ENCODE measurements at regions of chr2 and their contacts with region 1.

Region 1: DNA sequence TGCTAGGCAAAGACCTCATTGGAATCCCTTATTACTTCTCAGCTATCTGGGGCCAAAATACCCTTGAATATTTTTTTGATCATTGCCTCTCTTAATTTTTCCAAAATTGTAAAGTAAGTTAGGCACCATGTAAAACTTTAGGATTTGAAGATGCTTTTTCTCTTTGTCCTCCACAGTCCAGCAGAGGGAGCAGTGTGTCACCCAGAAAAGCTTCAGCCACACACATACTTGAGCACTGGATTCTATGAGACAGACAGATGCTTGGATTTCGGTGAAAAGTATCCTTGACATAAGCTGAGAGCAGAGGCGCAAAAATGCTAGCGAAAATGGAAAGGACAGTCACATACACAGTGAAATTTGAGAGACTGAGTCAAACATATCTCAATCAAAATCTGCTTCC is 74.7 kb upstream of the KCNJ3 start:
- DNase-seq: peak in 1 of 2 donors; percentile 49
- ATAC-seq: peak; percentile 66
- H3K4me3 ChIP-seq: no peak overlapping the region
- H3K27ac ChIP-seq: no peak overlapping the region
- H3K4me1 ChIP-seq: no peaks in the 10 kb centered on the region
- H3K27me3 ChIP-seq: no peaks in the 10 kb centered on the region

Region 2: GRCh38 chr2:153595939-153596338 is 1027.9 kb before region 1 on chr2:
- intact Hi-C with region 1: no loop called
- DNase-seq: no peak
- ATAC-seq: no peak
- H3K4me3 ChIP-seq: no peak overlapping the region
- H3K27ac ChIP-seq: no peak overlapping the region
- H3K4me1 ChIP-seq: no peaks in the 10 kb centered on the region
- H3K27me3 ChIP-seq: no peaks in the 10 kb centered on the region

Region 3: DNA sequence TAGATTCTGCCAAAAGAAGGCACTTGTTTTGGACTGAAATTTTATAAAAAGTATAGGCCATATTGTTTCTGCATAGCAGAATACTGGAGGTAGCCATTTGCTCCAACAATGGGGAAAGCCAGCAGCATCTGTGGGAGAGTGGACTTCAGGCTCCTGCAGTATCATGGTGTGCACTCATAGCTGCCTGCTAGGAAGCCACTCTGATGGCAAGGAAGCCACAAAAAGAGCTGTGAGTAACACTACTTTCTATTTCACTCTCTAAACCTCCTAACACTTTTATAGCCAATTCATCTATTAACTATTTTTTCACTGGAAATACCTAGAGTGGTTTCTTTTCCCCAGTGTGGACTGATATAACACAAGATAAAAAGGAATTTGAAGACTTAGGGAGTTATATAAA is 69.8 kb before region 1 on chr2:
- intact Hi-C with region 1: loop called in 1 of 2 experiments (anchors 5 kb)
- DNase-seq: no peak
- ATAC-seq: no peak
- H3K4me3 ChIP-seq: no peak overlapping the region
- H3K27ac ChIP-seq: no peak overlapping the region
- H3K4me1 ChIP-seq: no peaks in the 10 kb centered on the region
- H3K27me3 ChIP-seq: no peaks in the 10 kb centered on the region

Region 4: DNA sequence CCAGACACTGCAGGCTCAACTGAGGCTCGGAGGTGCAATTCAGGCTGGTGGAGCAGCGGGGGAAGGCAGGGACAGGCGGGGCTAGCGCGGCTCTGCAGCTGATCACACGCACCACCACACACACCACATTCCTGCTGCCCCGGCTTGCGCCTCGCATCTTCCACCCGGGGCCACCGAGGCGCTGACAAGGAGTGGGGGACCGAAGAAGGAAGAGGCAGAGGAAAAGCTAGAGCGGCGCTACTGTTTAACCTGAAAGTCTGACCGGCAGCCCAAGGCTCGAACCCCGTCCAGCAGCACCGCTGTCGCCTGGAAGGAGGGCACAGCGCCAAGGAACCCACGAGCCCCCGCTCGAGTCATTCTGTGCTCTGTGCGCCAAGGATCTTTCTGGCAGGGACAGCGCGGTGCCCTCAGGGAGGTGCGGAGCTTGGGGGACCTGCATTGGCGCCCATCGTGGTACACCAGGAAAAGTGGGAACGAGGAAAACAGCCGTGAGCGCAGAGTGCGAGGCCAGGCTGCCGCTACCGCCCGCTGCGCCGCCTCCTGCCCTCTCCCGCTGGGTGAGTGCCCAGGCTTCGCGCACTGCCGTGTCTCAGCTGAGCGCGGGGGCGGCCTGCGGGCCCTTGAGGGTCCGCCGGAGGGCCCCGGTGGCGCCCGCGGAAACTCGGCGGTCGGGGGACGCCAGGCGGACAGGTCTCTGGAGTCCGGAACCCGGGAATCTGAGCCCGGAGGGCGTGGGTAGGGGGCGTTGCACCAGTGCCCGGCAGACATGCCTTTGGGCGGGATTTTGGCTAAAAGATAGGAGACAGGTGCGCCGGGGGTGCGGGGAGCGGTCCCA is 73.8 kb after region 1 on chr2:
- intact Hi-C with region 1: loop called in 1 of 2 experiments (anchors 5 kb)
- DNase-seq: peak; percentile 60 to 84
- ATAC-seq: peak; percentile 76
- H3K4me3 ChIP-seq: peak overlapping the region; percentile 50 to 72
- H3K27ac ChIP-seq: peak overlapping the region in 1 of 2 donors; percentile 18
- H3K4me1 ChIP-seq: no peaks in the 10 kb centered on the region
- H3K27me3 ChIP-seq: no peaks in the 10 kb centered on the region

Measured in aorta (tissue), 5 donors.